Caco-2 (cell line): ENCODE measurements at regions of chr18 and their contacts with region 1.

Region 1: GRCh38 chr18:20971886-20972267 is 139.7 kb downstream of the ROCK1 start:
- DNase-seq: peak in 1 of 2 experiments; percentile 55
- H3K4me3 ChIP-seq: no peak overlapping the region
- H3K4me3 Mint-ChIP-seq: no peak overlapping the region
- H3K27ac Mint-ChIP-seq: no peak overlapping the region
- H3K4me1 ChIP-seq: no peaks in the 10 kb centered on the region
- H3K4me1 Mint-ChIP-seq: peaks cover 6% of the 10 kb centered on the region
- H3K27me3 ChIP-seq: no peaks in the 10 kb centered on the region
- H3K27me3 Mint-ChIP-seq: no peaks in the 10 kb centered on the region
- CTCF ChIP-seq: peak; percentile 45 to 52

Region 2: DNA sequence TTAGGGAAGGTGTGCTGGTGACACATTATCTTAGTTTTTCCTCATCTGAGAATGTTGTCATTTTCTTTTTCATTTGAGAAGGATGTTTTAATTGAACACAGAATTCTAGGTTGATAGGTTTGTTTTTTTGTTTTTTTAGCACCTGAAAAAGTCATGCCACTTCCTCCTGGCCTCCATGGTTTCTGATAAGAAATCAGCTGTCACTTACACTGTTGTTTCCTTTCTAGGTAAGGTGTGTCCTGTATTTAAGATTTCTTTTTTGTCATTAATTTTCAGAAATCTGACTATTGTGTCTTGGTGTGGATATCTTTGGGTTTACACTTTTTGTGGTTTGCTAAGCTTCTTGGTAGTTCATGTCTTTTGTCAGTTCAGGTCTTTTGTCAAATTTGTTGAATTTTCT is 40.4 kb after region 1 on chr18:
- CTCF ChIA-PET with region 1: no interaction called
- POLR2A ChIA-PET with region 1: no interaction called
- intact Hi-C with region 1: loop called (anchors 5 kb)
- DNase-seq: no peak
- H3K4me3 ChIP-seq: no peak overlapping the region
- H3K4me3 Mint-ChIP-seq: no peak overlapping the region
- H3K27ac Mint-ChIP-seq: no peak overlapping the region
- H3K4me1 ChIP-seq: peaks cover 19% of the 10 kb centered on the region
- H3K4me1 Mint-ChIP-seq: peaks cover 18% of the 10 kb centered on the region
- H3K27me3 ChIP-seq: no peaks in the 10 kb centered on the region
- H3K27me3 Mint-ChIP-seq: no peaks in the 10 kb centered on the region
- CTCF ChIP-seq: no peak

Region 3: DNA sequence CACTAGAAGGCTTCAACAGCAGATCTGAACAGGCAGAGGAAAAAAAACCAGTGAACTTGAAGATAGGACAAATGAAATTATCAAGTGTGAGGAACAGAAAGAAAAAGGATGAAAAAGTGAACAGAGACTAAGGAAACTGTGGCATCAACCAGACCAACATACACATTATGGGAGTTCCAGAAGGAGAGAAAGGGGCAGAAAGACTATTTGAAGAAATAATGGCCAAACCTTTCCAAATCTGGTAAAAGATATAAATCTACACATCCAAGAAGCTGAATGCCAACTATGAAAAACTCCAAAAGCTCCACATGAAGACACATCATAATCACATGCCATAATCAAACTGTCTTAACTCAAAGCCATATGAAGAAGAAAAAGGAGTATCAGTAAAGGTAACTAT is 60.0 kb after region 1 on chr18:
- CTCF ChIA-PET with region 1: no interaction called
- POLR2A ChIA-PET with region 1: no interaction called
- intact Hi-C with region 1: no loop called
- DNase-seq: no peak
- H3K4me3 ChIP-seq: no peak overlapping the region
- H3K4me3 Mint-ChIP-seq: no peak overlapping the region
- H3K27ac Mint-ChIP-seq: no peak overlapping the region
- H3K4me1 ChIP-seq: no peaks in the 10 kb centered on the region
- H3K4me1 Mint-ChIP-seq: no peaks in the 10 kb centered on the region
- H3K27me3 ChIP-seq: no peaks in the 10 kb centered on the region
- H3K27me3 Mint-ChIP-seq: no peaks in the 10 kb centered on the region
- CTCF ChIP-seq: no peak

Region 4: DNA sequence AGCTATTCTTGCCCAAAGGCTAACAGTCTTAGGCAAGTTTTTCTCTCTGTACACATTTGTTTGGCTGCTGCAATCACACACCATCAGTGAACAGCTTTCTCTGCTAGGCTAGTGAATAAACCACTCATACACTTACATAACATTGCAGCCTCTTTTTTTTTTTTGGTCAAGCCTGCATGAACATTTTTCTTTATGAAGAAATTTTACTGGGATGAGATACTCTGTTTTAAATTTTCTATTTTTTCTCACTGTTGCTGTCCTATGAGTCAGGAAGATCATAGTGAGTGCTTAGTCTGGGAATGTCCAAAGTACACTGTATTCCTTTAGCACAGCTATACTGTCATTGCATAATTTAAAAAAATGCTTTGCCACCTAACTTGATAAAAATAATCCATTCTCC is 81.2 kb after region 1 on chr18:
- CTCF ChIA-PET with region 1: no interaction called
- POLR2A ChIA-PET with region 1: no interaction called
- intact Hi-C with region 1: loop called (anchors 10 kb)
- DNase-seq: no peak
- H3K4me3 ChIP-seq: no peak overlapping the region
- H3K4me3 Mint-ChIP-seq: no peak overlapping the region
- H3K27ac Mint-ChIP-seq: no peak overlapping the region
- H3K4me1 ChIP-seq: peaks cover 7% of the 10 kb centered on the region
- H3K4me1 Mint-ChIP-seq: peaks cover 5% of the 10 kb centered on the region
- H3K27me3 ChIP-seq: no peaks in the 10 kb centered on the region
- H3K27me3 Mint-ChIP-seq: no peaks in the 10 kb centered on the region
- CTCF ChIP-seq: no peak

Region 5: DNA sequence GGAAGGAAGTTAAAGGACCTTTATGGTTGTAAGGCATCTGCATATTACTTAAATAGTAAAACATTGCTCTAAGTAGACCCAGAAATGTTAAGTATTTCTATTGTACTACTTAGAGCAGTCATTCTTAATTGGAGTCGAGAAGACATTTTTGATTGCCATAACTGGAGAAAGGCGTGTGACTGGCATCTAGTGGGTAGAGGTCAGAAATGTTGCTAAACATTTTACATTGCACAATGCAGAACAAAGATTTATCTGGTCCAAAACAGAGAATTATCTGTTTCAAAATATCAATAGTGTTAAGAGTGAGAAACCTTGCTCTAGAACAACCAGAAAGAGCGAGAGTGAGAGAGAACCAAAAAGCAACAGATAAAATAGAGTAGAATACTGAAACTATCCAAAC is 163.0 kb after region 1 on chr18:
- CTCF ChIA-PET with region 1: no interaction called
- POLR2A ChIA-PET with region 1: no interaction called
- intact Hi-C with region 1: loop called (anchors 1 kb)
- DNase-seq: no peak
- H3K4me3 ChIP-seq: no peak overlapping the region
- H3K4me3 Mint-ChIP-seq: no peak overlapping the region
- H3K27ac Mint-ChIP-seq: no peak overlapping the region
- H3K4me1 ChIP-seq: no peaks in the 10 kb centered on the region
- H3K4me1 Mint-ChIP-seq: no peaks in the 10 kb centered on the region
- H3K27me3 ChIP-seq: no peaks in the 10 kb centered on the region
- H3K27me3 Mint-ChIP-seq: no peaks in the 10 kb centered on the region
- CTCF ChIP-seq: peak in 1 of 2 experiments; percentile 8

Region 6: GRCh38 chr18:21179590-21180220 is 207.8 kb after region 1 on chr18:
- CTCF ChIA-PET with region 1: no interaction called
- POLR2A ChIA-PET with region 1: no interaction called
- intact Hi-C with region 1: loop called (anchors 1 kb)
- DNase-seq: peak; percentile 53 to 66
- H3K4me3 ChIP-seq: no peak overlapping the region
- H3K4me3 Mint-ChIP-seq: no peak overlapping the region
- H3K27ac Mint-ChIP-seq: no peak overlapping the region
- H3K4me1 ChIP-seq: peaks cover 30% of the 10 kb centered on the region
- H3K4me1 Mint-ChIP-seq: peaks cover 32% of the 10 kb centered on the region
- H3K27me3 ChIP-seq: no peaks in the 10 kb centered on the region
- H3K27me3 Mint-ChIP-seq: no peaks in the 10 kb centered on the region
- CTCF ChIP-seq: peak; percentile 74 to 75